Testis (tissue), 5 donors: ENCODE measurements at regions of chr1 and their contacts with region 1.

Region 1: DNA sequence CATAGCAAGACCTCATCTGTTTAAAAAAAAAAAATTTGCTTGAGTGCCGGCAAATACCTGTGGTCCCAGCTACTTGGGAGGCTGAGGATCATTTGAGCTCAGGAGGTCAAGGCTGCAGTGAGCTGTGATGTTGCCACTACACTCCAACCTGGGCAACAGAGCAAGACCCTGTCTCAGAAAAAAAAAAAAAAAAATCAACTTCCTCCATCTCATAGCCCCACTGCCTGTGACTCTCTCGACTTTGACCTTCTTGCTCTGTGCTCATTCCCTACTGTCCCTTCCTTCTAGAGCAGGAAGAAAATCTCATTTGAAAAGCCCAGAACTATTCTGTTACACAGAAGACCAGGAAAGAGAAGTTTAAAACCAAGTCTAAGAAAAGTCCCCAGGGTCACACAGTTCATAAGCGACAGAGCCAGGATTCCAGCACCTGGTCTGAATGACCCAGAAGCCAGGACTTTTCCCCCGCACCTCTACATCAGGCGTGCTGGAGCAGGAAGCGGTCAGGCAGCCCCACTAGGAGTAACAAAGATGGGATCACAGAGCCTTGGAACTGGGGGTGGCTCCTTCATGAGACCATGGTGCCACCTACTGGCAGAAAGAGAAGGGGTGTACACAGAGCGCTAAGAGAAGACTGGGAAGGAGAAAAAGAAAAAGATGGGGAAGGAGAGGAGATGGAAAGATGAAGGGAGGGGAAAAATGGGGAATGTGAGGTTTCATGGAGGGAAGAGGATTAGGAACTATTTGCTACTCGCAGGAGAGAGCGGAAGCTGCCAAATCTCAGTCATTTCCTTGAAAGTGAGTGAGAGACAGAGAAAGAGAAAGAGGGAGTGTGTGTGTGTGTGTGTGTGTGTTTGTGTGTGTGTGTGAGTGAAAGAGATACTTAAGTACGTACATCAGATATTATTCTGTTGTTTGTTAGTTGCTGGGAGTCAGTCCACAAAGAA is 3.1 kb upstream of the P3R3URF start:
- DNase-seq: peak; percentile 91
- H3K4me3 ChIP-seq: no peak overlapping the region
- H3K27ac ChIP-seq: no peak overlapping the region
- H3K4me1 ChIP-seq: peaks cover 17% of the 10 kb centered on the region
- H3K27me3 ChIP-seq: no peaks in the 10 kb centered on the region
- CTCF ChIP-seq: peak; percentile 75 to 86 (median 82)
- POLR2A ChIP-seq: no peak

Region 2: GRCh38 chr1:45583264-45583665 is 596.1 kb before region 1 on chr1:
- intact Hi-C with region 1: no loop called
- DNase-seq: peak; percentile 97
- H3K4me3 ChIP-seq: peak overlapping the region; percentile 82 to 97
- H3K27ac ChIP-seq: peak overlapping the region; percentile 89 to 97
- H3K4me1 ChIP-seq: peaks cover 17% of the 10 kb centered on the region
- H3K27me3 ChIP-seq: no peaks in the 10 kb centered on the region
- CTCF ChIP-seq: no peak
- POLR2A ChIP-seq: no peak

Region 3: DNA sequence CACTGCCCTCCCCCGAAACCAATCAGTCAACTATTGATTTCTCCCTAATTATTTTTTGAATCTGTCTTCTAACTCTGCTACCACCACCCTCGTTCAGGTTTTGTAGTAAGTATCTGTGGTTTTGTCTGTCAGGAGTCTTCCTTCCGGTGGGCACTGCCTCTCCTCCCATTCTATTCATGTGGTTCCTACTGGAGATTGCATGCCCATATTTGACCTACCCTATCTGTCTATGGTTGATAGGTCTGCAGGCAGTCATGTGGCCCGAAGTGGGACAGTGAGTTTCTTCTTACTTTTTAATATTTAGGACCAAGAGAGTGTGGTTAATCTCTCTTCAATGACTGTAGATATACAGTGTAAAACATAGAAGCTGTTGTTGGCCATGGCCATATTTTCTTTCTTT is 393.8 kb before region 1 on chr1:
- intact Hi-C with region 1: no loop called
- DNase-seq: no peak
- H3K4me3 ChIP-seq: no peak overlapping the region
- H3K27ac ChIP-seq: no peak overlapping the region
- H3K4me1 ChIP-seq: no peaks in the 10 kb centered on the region
- H3K27me3 ChIP-seq: no peaks in the 10 kb centered on the region
- CTCF ChIP-seq: no peak
- POLR2A ChIP-seq: no peak

Region 4: DNA sequence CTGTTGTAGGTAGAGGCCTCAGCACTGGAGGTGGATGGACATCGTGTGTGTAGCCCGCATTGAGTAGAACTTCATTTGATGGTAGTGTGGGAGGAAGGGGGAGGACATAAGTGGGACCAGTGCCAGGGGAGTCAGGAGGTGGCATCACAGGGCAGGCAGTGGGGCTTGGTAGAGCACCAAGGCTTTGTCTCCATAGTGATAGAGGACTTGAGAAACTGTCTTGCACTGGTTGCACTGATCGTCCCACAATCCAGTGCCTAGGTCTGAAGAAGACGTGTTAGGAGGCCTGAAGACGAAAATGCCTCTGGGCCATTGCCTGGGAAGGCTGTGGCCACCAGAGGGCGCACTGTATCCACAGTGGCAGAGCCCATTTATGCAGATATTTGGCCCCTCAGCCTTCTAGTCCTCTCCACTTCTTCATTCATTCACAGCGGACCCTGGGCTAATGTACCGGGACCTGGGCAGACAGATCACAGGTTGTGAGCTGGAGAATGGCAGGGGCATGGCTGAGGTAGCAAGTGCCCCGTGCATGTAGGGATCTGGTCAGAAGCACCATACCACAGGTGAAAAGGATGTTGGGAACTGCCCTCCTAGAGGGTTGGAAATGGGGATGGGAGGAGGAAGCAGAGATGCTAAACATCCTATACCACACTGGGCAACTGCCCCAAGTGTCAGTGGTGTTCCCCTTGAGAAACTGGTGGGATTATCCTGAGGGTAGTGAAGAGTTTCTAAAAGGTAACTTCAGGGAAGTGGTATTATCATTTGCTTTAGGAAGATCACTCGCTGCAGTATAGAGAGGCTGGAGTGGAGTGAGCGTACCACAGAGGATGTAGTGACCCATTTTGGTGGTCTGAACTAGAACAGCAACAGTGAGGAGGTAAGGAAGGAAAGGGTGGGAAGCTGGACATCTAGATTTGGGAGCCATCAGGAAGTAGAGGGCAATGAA is 142.2 kb before region 1 on chr1:
- intact Hi-C with region 1: loop called (anchors 2 kb)
- DNase-seq: peak; percentile 92
- H3K4me3 ChIP-seq: no peak overlapping the region
- H3K27ac ChIP-seq: no peak overlapping the region
- H3K4me1 ChIP-seq: peaks cover 5% of the 10 kb centered on the region
- H3K27me3 ChIP-seq: no peaks in the 10 kb centered on the region
- CTCF ChIP-seq: peak; percentile 94 to 96 (median 95)
- POLR2A ChIP-seq: no peak

Region 5: GRCh38 chr1:46247436-46248121 is 68.2 kb after region 1 on chr1 and contains the start of gene RAD54L:
- intact Hi-C with region 1: no loop called
- DNase-seq: peak; percentile 99
- H3K4me3 ChIP-seq: peak within 1 kb of the TSS; percentile 58 to 73
- H3K27ac ChIP-seq: peak within 1 kb of the TSS in 1 of 2 donors; percentile 73
- H3K4me1 ChIP-seq: no peaks in the 10 kb centered on the region
- H3K27me3 ChIP-seq: no peaks in the 10 kb centered on the region
- CTCF ChIP-seq: no peak
- POLR2A ChIP-seq: no peak
- total RNA-seq, gene RAD54L: 24.5 to 31.4 TPM